ENCODE measurements at regions of chr16 and their contacts with region 1.

Region 1: GRCh38 chr16:20660325-20660724 is 37.2 kb downstream of the ACSM1 start:
- DNase-seq: peak in 2 of 6 donors; percentile 21 to 36
- ATAC-seq: peak in 3 of 4 donors; percentile 37 to 83 (median 73)
- H3K4me3 ChIP-seq: no peak overlapping the region
- H3K27ac ChIP-seq: peak overlapping the region in 1 of 4 donors; percentile 30
- H3K4me1 ChIP-seq: peaks cover 0 to 4% (median 0%) of the 10 kb centered on the region in 3 donors
- H3K27me3 ChIP-seq: no peaks in the 10 kb centered on the region
- CTCF ChIP-seq: no peak

Region 2: GRCh38 chr16:20611975-20612481 is 48.3 kb before region 1 on chr16:
- intact Hi-C with region 1: loop called in 1 of 3 experiments (anchors 10 kb)
- DNase-seq: peak; percentile 86 to 95 (median 89)
- ATAC-seq: peak; percentile 63 to 79 (median 72)
- H3K4me3 ChIP-seq: no peak overlapping the region
- H3K27ac ChIP-seq: peak overlapping the region; percentile 70 to 85 (median 83)
- H3K4me1 ChIP-seq: peaks cover 4 to 15% (median 7%) of the 10 kb centered on the region in 3 donors
- H3K27me3 ChIP-seq: no peaks in the 10 kb centered on the region
- CTCF ChIP-seq: no peak

Region 3: DNA sequence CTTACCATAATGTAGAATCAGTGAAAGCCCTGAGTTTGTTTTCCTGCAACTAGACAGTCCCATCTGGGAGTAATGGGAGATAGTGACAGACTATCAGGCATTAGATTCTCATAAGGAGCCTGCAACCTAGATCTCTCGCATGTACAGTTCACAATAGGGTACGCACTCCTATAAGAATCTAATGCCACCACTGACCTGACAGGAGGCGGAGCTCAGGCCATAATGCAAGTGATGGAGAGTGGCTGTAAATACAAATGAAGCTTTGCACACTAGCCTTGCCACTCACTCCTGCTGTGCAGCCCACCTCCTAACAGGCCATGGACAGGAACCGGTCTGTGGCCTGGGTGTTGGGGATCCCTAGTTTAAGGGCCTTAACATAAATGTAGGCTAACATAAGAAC is 59.9 kb after region 1 on chr16:
- intact Hi-C with region 1: no loop called
- DNase-seq: no peak
- ATAC-seq: no peak
- H3K4me3 ChIP-seq: no peak overlapping the region
- H3K27ac ChIP-seq: no peak overlapping the region
- H3K4me1 ChIP-seq: no peaks in the 10 kb centered on the region
- H3K27me3 ChIP-seq: no peaks in the 10 kb centered on the region
- CTCF ChIP-seq: no peak

Measured in pancreas (tissue), 10 donors.